ENCODE measurements at regions of chr9 and their contacts with region 1.

Region 1: DNA sequence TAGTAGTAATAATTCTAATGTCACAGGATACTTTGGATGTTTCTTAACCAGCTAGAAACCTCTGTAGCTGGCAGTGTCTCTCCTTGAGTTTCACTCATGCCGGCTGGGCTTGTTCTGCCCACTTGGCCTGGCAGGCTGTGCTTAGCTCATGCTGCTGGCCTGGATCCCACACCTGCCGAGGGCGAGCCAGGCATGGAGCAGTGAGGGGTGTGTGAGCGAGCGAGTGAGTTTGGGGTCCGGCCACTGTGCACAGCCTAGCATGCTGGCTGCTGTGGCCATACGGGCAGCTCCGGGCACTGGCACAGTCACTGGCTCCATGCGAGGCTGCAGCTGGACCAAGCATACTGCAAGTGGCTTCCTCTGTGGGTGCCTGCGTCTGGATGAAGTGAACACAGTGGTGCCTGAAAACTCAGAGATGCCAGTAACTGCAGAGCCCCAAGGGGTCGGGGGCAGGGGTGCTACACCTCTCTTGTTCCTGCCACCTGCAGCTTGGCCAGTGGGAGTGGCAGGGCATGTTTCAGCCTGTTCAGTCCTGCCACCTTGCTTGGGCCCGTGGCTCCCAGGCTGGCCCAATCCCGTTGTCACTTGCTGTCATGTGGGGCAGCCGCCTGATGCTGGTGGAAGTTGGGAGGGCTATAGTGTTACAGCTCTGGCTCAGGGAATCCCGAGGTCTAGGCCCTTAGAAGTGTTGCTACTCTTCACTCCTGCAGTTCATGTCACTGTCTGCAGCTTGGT is 9.9 kb downstream of the FSD1L start:
- DNase-seq: no peak
- H3K4me3 ChIP-seq: no peak overlapping the region
- H3K27ac ChIP-seq: no peak overlapping the region
- H3K4me1 ChIP-seq: no peaks in the 10 kb centered on the region
- H3K27me3 ChIP-seq: no peaks in the 10 kb centered on the region
- CTCF ChIP-seq: no peak

Region 2: GRCh38 chr9:105647595-105648349 is 190.0 kb after region 1 on chr9:
- CTCF ChIA-PET with region 1: no interaction called
- POLR2A ChIA-PET with region 1: interaction called, 17 read pairs
- intact Hi-C with region 1: no loop called
- DNase-seq: no peak
- H3K4me3 ChIP-seq: no peak overlapping the region
- H3K27ac ChIP-seq: no peak overlapping the region
- H3K4me1 ChIP-seq: no peaks in the 10 kb centered on the region
- H3K27me3 ChIP-seq: no peaks in the 10 kb centered on the region
- CTCF ChIP-seq: no peak